ENCODE measurements at regions of chr11 and their contacts with region 1.

Region 1: DNA sequence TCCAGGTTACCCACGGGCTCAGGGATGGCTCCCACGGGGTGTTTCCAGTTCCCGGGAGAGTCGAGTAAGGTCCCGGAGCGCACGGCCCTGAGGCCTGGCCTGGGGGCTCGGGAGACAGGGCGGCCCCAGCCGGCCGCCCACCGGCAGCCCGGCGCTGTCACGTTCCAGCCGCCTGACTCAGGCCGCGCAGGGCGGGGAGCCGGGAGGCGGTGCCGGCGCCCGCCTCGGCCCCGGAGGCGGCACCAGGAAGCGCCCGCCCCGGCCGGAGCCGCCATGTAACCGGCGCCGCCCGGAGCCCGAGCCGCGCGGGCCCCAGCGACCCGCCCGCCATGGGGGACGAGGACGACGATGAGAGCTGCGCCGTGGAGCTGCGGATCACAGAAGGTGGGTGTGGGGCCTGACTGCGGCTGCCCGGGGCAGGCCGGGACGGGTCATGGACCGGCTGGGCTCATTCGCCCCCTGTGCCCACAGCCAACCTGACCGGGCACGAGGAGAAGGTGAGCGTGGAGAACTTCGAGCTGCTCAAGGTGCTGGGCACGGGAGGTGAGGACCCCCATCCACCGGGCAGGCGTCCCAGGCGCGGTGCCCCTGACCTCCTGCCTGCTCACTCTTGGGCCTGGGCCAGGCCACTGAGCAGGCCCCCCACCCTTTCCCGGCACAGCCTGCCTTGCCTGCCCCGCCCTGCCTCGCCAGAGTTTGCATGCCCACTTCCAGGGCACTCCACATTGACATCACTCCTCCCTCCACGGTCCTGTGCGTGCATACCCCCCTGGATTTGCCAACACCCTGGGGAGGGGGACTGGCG is at the start of gene RPS6KA4:
- DNase-seq: peak in 1 of 2 experiments; percentile 75
- H3K4me3 ChIP-seq: peak within 1 kb of the TSS; percentile 61 to 83 (median 72)
- H3K27ac ChIP-seq: no peak within 1 kb of the TSS; the same call in 1 of the 2 replicates
- H3K4me1 ChIP-seq: peaks cover 0 to 39% (median 30%) of the 10 kb centered on the region in 4 experiments; a peak in 6 of 7 replicates
- H3K27me3 ChIP-seq: no peaks in the 10 kb centered on the region
- CTCF ChIP-seq: no peak
- EP300 ChIP-seq: no peak
- POLR2A ChIP-seq: no peak
- RAD21 ChIP-seq: no peak
- total RNA-seq, gene RPS6KA4: 12.6 and 13.2 TPM in 2 replicates

Region 2: DNA sequence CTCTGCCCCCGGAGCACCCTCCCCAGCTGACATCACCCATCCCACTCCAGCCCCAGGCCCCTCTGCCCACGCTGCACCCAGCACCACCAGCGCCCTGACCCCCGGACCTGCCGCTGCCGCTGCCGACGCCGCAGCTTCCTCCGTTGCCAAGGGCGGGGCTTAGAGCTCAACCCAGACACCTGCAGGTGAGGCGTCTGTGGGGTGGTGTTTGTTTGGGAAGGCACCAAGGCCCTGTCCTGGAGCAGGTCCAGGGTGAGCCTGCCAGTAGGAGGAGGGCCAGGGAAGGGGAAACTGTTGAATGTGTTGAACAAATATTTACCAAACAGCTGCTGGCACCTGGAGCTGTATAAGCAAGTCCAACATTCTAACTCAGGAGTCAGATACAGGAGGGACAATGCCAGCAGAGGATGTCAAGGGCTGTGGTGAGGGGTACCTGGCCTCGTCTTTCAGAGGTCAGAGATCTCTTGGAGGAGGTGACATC is 121.6 kb before region 1 on chr11:
- CTCF ChIA-PET with region 1: no interaction called
- POLR2A ChIA-PET with region 1: no interaction called
- DNase-seq: no peak
- H3K4me3 ChIP-seq: no peak overlapping the region
- H3K27ac ChIP-seq: no peak overlapping the region
- H3K4me1 ChIP-seq: peaks cover 0 to 12% (median 6%) of the 10 kb centered on the region in 4 experiments; a peak in 6 of 7 replicates
- H3K27me3 ChIP-seq: peaks cover 0 to 6% (median 3%) of the 10 kb centered on the region in 4 experiments; a peak in 4 of 7 replicates
- CTCF ChIP-seq: no peak
- EP300 ChIP-seq: no peak
- POLR2A ChIP-seq: no peak
- RAD21 ChIP-seq: no peak

Region 3: DNA sequence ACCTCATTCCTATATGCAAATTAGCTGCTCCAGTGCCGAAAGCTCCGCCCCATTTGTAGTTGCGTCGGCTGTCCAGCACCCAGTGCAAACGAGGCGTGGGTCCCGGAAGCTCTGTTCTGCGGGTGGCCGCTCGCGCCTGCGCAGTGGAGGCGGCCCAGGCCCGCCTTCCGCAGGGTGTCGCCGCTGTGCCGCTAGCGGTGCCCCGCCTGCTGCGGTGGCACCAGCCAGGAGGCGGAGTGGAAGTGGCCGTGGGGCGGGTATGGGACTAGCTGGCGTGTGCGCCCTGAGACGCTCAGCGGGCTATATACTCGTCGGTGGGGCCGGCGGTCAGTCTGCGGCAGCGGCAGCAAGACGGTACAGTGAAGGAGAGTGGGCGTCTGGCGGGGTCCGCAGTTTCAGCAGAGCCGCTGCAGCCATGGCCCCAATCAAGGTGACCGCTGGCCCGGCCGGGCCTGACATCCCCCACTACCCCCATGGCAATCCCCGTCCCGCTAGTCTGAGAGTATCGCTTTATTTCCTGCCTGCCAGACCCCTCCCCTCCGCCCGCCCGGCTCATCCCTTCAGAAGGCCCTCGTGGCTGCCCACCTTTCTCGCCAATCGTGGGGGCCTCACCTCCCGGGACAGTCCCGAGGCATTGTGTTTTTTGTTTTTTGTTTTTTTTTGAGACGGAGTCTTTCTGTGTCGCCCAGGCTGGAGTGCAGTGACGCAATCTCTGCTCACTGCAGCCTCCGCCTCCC is 41.0 kb before region 1 on chr11 and contains the start of gene PRDX5:
- CTCF ChIA-PET with region 1: interaction called, 614 read pairs
- POLR2A ChIA-PET with region 1: interaction called, 47 read pairs
- DNase-seq: peak in 1 of 2 experiments; percentile 90
- H3K4me3 ChIP-seq: peak within 1 kb of the TSS; percentile 73 to 80 (median 77)
- H3K27ac ChIP-seq: peak within 1 kb of the TSS; percentile 91
- H3K4me1 ChIP-seq: peaks cover 1 to 12% (median 3%) of the 10 kb centered on the region in 4 experiments; a peak in 6 of 7 replicates
- H3K27me3 ChIP-seq: no peaks in the 10 kb centered on the region
- CTCF ChIP-seq: peak in 1 of 3 experiments; percentile 51; a peak in 2 of 4 replicates
- EP300 ChIP-seq: no peak
- POLR2A ChIP-seq: no peak
- RAD21 ChIP-seq: peak; percentile 39 to 62
- total RNA-seq, gene PRDX5: 201 and 225 TPM in 2 replicates

Region 4: DNA sequence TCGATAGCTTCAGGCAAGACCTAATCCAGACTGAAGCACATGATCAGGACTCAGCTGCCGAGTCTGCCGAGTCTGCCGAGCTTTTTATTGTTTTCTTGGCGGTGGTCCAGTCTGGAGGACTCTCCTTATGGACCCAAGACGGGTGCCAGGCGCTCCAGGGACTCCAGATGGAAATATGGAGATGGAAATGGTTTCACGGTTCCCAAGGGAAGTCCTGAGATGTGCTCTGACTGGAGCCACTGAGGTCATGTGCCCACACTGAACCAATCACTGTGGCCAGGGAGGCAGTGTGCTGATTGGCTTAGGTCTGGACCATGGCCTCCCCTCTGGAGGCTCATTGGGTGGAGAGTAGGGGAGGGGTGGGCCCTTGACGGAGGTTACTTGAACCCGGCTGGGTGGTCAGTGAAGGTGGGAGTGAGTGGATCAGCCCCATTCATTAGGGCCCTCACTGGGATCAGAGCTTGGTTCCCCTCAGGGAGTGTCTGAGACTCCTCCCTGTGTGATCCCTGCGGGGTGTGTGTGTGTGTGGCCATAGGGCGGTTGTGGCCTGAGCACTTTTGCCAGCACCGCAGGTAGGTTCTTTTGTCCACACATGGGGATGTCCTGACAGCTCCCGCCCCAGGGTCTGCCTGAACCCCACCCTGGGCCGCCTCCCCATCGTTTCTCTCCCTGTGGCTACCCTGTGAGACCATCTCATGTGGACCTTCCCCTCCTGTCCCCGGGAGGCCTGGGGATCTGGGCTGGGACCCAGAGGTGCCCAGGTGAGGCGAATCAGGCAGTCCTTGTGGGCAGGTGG is 13.9 kb after region 1 on chr11:
- CTCF ChIA-PET with region 1: interaction called, 80 read pairs
- POLR2A ChIA-PET with region 1: interaction called, 14 read pairs
- DNase-seq: peak in 1 of 2 experiments; percentile 62
- H3K4me3 ChIP-seq: peak overlapping the region in 1 of 4 experiments; percentile 35; a peak in 2 of 8 replicates
- H3K27ac ChIP-seq: no peak overlapping the region
- H3K4me1 ChIP-seq: peaks cover 0 to 5% (median 2%) of the 10 kb centered on the region in 4 experiments; a peak in 4 of 7 replicates
- H3K27me3 ChIP-seq: no peaks in the 10 kb centered on the region
- CTCF ChIP-seq: no peak
- EP300 ChIP-seq: no peak
- POLR2A ChIP-seq: no peak; a peak in 1 of 3 replicates
- RAD21 ChIP-seq: no peak

Region 5: DNA sequence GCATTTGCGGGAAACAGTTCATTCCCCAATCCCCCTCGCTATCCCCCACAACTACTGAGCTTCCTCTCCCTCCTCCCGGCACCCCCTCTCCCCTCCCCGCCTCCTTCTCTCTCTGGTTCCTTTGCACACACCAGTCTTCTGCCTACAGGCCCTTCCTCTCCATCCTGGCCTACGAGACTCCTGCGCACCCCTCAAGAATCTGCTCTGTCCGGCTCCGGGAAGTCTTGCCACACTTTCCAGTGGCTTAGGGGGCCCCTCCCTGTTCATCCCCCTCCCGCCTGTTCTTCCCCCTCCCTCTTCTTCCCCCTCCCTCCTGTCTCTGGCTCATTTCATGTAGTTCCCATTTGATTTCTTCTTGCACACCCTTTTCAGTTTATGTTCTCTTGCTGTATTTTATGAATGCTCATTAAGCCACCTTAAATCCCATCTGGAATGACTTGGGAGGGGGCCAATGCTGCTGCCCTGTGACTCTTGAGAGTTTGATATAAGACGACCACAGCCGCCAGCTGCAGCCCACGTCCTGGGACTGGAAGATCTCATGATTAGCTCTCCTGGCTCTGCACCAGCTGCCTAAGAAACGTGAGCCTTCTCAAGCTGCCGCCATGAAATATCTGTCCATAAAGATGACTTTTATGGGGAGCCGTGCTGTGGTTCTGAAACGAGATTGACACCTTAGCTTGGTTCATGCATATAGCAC is 50.7 kb after region 1 on chr11:
- CTCF ChIA-PET with region 1: interaction called, 12 read pairs
- POLR2A ChIA-PET with region 1: interaction called, 3 read pairs
- DNase-seq: no peak
- H3K4me3 ChIP-seq: no peak overlapping the region
- H3K27ac ChIP-seq: no peak overlapping the region
- H3K4me1 ChIP-seq: peaks cover 0 to 7% (median 3%) of the 10 kb centered on the region in 4 experiments; a peak in 6 of 7 replicates
- H3K27me3 ChIP-seq: peaks cover 0 to 5% (median 2%) of the 10 kb centered on the region in 4 experiments; a peak in 4 of 7 replicates
- CTCF ChIP-seq: no peak
- EP300 ChIP-seq: no peak
- POLR2A ChIP-seq: no peak
- RAD21 ChIP-seq: no peak

Region 6: GRCh38 chr11:64436000-64436399 is 76.9 kb after region 1 on chr11:
- CTCF ChIA-PET with region 1: interaction called, 17 read pairs
- POLR2A ChIA-PET with region 1: no interaction called
- DNase-seq: no peak
- H3K4me3 ChIP-seq: no peak overlapping the region
- H3K27ac ChIP-seq: no peak overlapping the region
- H3K4me1 ChIP-seq: peaks cover 0 to 2% (median 0%) of the 10 kb centered on the region in 4 experiments; a peak in 1 of 7 replicates
- H3K27me3 ChIP-seq: peaks cover 0 to 4% (median 2%) of the 10 kb centered on the region in 4 experiments; a peak in 3 of 7 replicates
- CTCF ChIP-seq: no peak
- EP300 ChIP-seq: no peak
- POLR2A ChIP-seq: no peak
- RAD21 ChIP-seq: no peak

Measured in H1 (cell line).